Pancreas (tissue), 10 donors: ENCODE measurements at regions of chr13 and their contacts with region 1.

Region 1: DNA sequence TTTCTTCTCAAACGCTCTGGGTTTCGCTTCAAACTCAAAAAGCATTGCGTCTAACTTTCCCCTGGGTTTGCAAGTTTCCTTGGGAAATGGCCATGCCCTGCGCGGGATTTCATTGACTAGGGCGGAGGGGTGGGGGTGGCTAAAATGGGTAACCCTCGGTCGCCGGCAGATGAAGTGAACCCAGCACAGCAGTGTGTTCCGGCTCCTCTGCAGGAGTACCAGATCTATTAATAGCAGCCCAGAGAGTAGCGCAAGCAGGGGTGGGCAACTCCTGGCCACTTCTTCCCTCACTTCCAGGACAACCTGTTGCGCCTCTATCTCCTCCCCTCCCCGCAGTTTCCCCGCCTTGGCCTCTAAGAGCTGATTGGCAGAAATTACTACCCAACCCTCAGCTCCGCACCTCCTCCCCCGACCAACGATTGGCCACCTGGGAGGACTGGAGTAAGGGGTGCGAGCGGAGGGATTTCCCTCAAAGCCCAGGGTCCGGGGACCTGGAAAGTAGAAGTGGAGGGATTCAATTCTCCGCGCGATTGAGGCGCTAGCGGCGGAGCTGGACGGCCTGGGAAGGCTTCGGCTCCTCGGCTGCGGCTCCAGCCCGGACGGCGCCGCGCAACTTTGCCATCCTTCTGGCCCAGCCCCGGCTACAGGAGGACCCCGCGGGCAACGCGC is at the start of gene FREM2:
- DNase-seq: peak; percentile 64 to 82 (median 74)
- ATAC-seq: peak; percentile 91 to 95 (median 94)
- H3K4me3 ChIP-seq: peak within 1 kb of the TSS; percentile 47 to 75 (median 64)
- H3K27ac ChIP-seq: peak within 1 kb of the TSS in 2 of 4 donors; percentile 38 to 58
- H3K4me1 ChIP-seq: no peaks in the 10 kb centered on the region
- H3K27me3 ChIP-seq: no peaks in the 10 kb centered on the region
- CTCF ChIP-seq: no peak
- total RNA-seq, gene FREM2: 2.4 to 9.8 (median 8.0) TPM

Region 2: GRCh38 chr13:38755793-38756192 is 69.1 kb after region 1 on chr13:
- intact Hi-C with region 1: loop called in 1 of 3 experiments (anchors 5 kb)
- DNase-seq: peak in 1 of 6 donors; percentile 45
- ATAC-seq: peak in 3 of 4 donors; percentile 53 to 83 (median 73)
- H3K4me3 ChIP-seq: no peak overlapping the region
- H3K27ac ChIP-seq: no peak overlapping the region
- H3K4me1 ChIP-seq: no peaks in the 10 kb centered on the region
- H3K27me3 ChIP-seq: no peaks in the 10 kb centered on the region
- CTCF ChIP-seq: no peak

Region 3: GRCh38 chr13:38914070-38914469 is 227.4 kb after region 1 on chr13:
- intact Hi-C with region 1: loop called in 1 of 3 experiments (anchors 10 kb)
- DNase-seq: no peak
- ATAC-seq: peak in 2 of 4 donors; percentile 21 to 44
- H3K4me3 ChIP-seq: no peak overlapping the region
- H3K27ac ChIP-seq: no peak overlapping the region
- H3K4me1 ChIP-seq: peaks cover 0 to 5% (median 0%) of the 10 kb centered on the region in 3 donors
- H3K27me3 ChIP-seq: no peaks in the 10 kb centered on the region
- CTCF ChIP-seq: no peak